T-cell (primary cell): ENCODE measurements at regions of chr18 and their contacts with region 1.

Region 1: GRCh38 chr18:26383454-26384270 is 157.4 kb downstream of the TAF4B start:
- DNase-seq: peak in 1 of 35 experiments; percentile 52
- ATAC-seq: peak in 2 of 4 experiments; percentile 40 to 53
- H3K4me3 ChIP-seq: no peak overlapping the region
- H3K4me3 Mint-ChIP-seq: no peak overlapping the region
- H3K27ac ChIP-seq: no peak overlapping the region
- H3K27ac Mint-ChIP-seq: no peak overlapping the region
- H3K4me1 ChIP-seq: no peaks in the 10 kb centered on the region
- H3K4me1 Mint-ChIP-seq: peaks cover 0 to 2% (median 0%) of the 10 kb centered on the region in 3 donors
- H3K27me3 ChIP-seq: no peaks in the 10 kb centered on the region
- H3K27me3 Mint-ChIP-seq: no peaks in the 10 kb centered on the region

Region 2: DNA sequence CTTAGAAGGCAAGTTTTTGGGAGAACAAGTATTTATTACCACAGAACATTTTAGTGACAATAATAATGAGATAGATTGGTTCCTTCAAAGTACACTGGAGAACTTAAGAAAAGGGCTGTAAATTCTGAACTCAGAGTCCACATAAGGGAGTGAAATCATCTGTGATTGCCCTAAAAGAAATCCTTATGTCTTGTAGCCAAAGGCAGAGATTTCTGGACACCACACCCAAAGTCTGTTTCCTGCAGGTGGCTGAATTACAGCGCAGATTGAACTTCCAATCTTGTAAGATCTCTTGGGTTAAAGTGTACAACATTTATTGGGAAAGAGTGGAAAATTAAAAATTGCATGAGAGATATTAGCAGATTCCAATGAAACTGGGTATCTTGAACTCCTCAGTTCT is 13.6 kb before region 1 on chr18:
- CTCF ChIA-PET with region 1: interaction called, 10 to 11 read pairs
- POLR2A ChIA-PET with region 1: no interaction called
- DNase-seq: no peak
- ATAC-seq: no peak
- H3K4me3 ChIP-seq: no peak overlapping the region
- H3K4me3 Mint-ChIP-seq: no peak overlapping the region
- H3K27ac ChIP-seq: no peak overlapping the region
- H3K27ac Mint-ChIP-seq: no peak overlapping the region
- H3K4me1 ChIP-seq: no peaks in the 10 kb centered on the region
- H3K4me1 Mint-ChIP-seq: no peaks in the 10 kb centered on the region
- H3K27me3 ChIP-seq: no peaks in the 10 kb centered on the region
- H3K27me3 Mint-ChIP-seq: no peaks in the 10 kb centered on the region